T-cell (primary cell): ENCODE measurements at regions of chr22 and their contacts with region 1.

Region 1: GRCh38 chr22:36365020-36365411 is 22.8 kb downstream of the MYH9 start:
- DNase-seq: peak in 34 of 35 experiments; percentile 69 to 96 (median 90)
- ATAC-seq: peak; percentile 80 to 94 (median 84)
- H3K4me3 ChIP-seq: no peak overlapping the region
- H3K4me3 Mint-ChIP-seq: peak overlapping the region; percentile 61 to 98 (median 63)
- H3K27ac ChIP-seq: peak overlapping the region; percentile 96
- H3K27ac Mint-ChIP-seq: peak overlapping the region; percentile 94 to 96
- H3K4me1 ChIP-seq: peaks cover 73 to 100% of the 10 kb centered on the region in 2 experiments
- H3K4me1 Mint-ChIP-seq: peaks cover 96 to 98% (median 97%) of the 10 kb centered on the region in 3 donors
- H3K27me3 ChIP-seq: no peaks in the 10 kb centered on the region
- H3K27me3 Mint-ChIP-seq: no peaks in the 10 kb centered on the region

Region 2: DNA sequence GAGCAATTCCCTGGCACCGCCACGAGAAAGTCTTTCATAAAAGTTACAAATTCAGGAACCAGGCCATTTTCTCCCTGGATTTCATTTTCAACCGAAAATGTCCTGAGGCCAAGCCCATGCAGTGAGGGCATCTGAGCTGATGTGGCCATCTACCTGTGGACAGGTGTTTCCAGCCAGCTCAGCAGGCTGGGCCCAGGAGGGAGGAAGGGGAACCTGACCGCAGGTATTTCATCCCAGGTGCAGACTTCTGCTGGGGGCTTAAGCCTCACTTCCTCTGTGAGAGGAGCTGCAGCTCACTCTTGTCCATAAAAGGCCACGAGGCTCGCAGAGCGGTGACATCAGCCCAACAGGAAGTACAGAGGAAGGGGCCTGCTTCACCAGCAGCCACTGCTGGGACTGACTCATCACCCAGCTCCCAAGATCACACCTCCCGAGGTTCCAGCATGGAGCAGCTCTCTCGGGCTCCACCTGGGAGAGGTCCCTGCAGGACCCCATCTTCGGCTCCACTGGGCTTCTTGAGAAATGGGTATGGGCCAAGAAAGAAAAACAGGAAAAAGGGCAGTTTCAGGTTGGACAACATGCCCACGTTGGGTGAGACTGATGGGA is 33.6 kb before region 1 on chr22:
- CTCF ChIA-PET with region 1: interaction called in 1 of 2 experiments, 15 read pairs
- POLR2A ChIA-PET with region 1: interaction called, 3 to 4 read pairs
- DNase-seq: peak; percentile 58 to 88 (median 71)
- ATAC-seq: peak; percentile 66 to 74 (median 71)
- H3K4me3 ChIP-seq: peak overlapping the region; percentile 28 to 62
- H3K4me3 Mint-ChIP-seq: peak overlapping the region; percentile 82 to 89 (median 83)
- H3K27ac ChIP-seq: peak overlapping the region; percentile 88
- H3K27ac Mint-ChIP-seq: peak overlapping the region; percentile 98 to 100
- H3K4me1 ChIP-seq: peaks cover 71 to 93% of the 10 kb centered on the region in 2 experiments
- H3K4me1 Mint-ChIP-seq: peaks cover 99 to 100% (median 99%) of the 10 kb centered on the region in 3 donors
- H3K27me3 ChIP-seq: no peaks in the 10 kb centered on the region
- H3K27me3 Mint-ChIP-seq: no peaks in the 10 kb centered on the region

Region 3: GRCh38 chr22:36387752-36388518 is 22.9 kb after region 1 on chr22 and contains the start of gene MYH9:
- CTCF ChIA-PET with region 1: interaction called in 1 of 2 experiments, 15 read pairs
- POLR2A ChIA-PET with region 1: interaction called, 6 to 14 read pairs
- DNase-seq: peak; percentile 95 to 99 (median 98)
- ATAC-seq: peak; percentile 83 to 89 (median 85)
- H3K4me3 ChIP-seq: peak within 1 kb of the TSS; percentile 86 to 97
- H3K4me3 Mint-ChIP-seq: peak within 1 kb of the TSS; percentile 88 to 98 (median 95)
- H3K27ac ChIP-seq: peak within 1 kb of the TSS; percentile 79
- H3K27ac Mint-ChIP-seq: peak within 1 kb of the TSS; percentile 89 to 98
- H3K4me1 ChIP-seq: peaks cover 12 to 37% of the 10 kb centered on the region in 2 experiments
- H3K4me1 Mint-ChIP-seq: peaks cover 26 to 48% (median 41%) of the 10 kb centered on the region in 3 donors
- H3K27me3 ChIP-seq: no peaks in the 10 kb centered on the region
- H3K27me3 Mint-ChIP-seq: no peaks in the 10 kb centered on the region
- total RNA-seq, gene MYH9: 816 to 1,109 (median 896) TPM

Region 4: GRCh38 chr22:36481393-36482168 is 116.6 kb after region 1 on chr22 and contains the start of gene TXN2:
- CTCF ChIA-PET with region 1: interaction called, 4 to 14 read pairs
- POLR2A ChIA-PET with region 1: interaction called, 3 to 6 read pairs
- DNase-seq: peak; percentile 87 to 98 (median 97)
- ATAC-seq: peak; percentile 84 to 88 (median 85)
- H3K4me3 ChIP-seq: peak within 1 kb of the TSS; percentile 75 to 85
- H3K4me3 Mint-ChIP-seq: peak within 1 kb of the TSS; percentile 86 to 97 (median 89)
- H3K27ac ChIP-seq: peak within 1 kb of the TSS; percentile 96
- H3K27ac Mint-ChIP-seq: peak within 1 kb of the TSS; percentile 91 to 92
- H3K4me1 ChIP-seq: peaks cover 7 to 26% of the 10 kb centered on the region in 2 experiments
- H3K4me1 Mint-ChIP-seq: peaks cover 13 to 25% (median 23%) of the 10 kb centered on the region in 3 donors
- H3K27me3 ChIP-seq: no peaks in the 10 kb centered on the region
- H3K27me3 Mint-ChIP-seq: no peaks in the 10 kb centered on the region
- total RNA-seq, gene TXN2: 36.9 to 47.6 (median 45.4) TPM